ENCODE measurements at regions of chr1 and their contacts with region 1.

Region 1: DNA sequence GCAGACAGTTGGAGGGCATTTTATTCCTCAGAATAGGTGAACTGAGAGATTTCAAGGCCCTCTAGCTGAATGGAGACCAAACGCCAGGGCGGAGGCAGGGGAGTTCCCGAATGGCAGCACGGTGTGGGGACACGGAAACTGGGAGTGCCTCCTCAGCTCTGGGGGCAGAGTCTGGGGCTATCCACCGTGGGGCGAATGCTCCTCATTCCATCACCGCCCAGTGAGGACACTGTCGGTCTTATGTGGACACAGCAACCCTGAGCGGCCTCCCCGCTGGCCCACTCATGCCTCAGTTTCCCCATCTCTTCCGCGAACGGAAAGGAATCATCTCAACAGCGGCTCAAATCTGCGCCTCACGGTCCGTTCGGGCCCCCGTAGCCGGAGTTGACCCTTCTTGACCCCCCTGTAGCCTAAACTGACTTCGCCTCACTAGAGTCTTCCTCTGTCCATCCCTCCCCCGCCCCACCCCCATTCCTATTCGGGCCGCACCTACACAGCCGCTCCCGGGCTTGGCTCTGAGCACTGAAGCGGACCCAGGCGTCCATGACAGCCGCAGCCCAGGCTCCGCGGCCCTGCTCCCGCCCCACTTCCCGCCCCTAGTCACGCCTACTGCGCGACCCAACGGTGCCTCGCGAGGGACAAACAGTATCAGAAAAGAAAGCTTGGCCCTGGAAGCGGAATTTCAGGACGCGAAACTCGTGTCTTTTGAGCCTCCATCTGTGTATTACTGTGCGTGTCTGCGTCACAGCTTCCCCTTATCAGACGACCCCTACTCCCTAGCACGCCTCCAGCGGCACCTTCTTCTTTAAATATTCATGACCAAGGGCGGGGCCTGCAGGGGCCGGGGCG is at the start of gene PEX11B:
- DNase-seq: peak; percentile 94
- H3K4me3 Mint-ChIP-seq: peak within 1 kb of the TSS; percentile 90
- H3K27ac Mint-ChIP-seq: peak within 1 kb of the TSS; percentile 96
- H3K4me1 Mint-ChIP-seq: peaks cover 45% of the 10 kb centered on the region
- H3K27me3 Mint-ChIP-seq: no peaks in the 10 kb centered on the region
- total RNA-seq, gene PEX11B: 22.8 to 25.6 TPM

Region 2: DNA sequence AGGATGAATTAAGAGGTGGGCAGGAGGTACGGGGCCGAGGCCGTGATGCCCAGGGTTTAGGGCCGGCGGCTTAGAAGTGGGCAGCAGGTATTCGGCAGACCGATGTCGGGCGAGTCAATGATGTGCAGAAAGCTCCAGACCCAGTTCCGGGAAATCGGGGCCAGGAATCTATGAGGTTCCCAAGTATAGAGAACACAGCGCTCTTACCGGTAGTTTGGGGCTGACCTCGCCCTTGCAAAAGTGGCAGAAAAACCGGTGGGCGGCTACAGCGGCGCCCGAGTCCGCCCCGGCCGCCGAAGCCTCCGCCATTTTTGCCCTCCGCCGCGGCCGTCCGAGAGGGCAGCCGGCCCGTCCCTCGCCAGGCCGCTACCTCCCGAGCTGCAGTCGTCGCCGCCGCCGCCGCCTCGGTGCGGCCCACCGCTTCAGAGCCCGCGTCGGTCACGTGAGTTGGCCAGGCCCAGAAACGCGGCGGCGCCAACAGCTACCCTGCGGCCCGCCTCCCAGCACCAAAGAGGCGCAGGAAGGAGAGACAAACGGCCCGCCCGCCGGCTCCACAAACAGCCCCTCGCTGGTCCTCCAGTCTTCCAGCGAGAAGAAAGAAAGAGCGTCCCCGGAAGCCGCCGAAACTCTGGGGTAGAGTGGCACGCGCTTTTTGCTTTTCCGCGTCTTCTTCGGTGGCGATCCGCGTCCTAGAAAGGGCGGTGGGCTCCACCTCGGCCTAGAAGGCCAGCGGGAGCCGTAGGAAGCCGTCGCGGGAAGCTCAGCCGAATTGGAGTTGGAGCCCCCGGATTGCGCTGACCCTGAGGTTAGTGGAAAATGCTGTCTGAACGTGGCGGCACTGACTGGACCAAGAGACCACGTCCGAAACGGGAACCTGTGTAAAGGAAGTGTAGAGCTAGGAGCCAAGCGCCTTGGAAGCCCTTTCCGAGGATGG is 94.5 kb before region 1 on chr1 and contains the starts of genes POLR3C and RNF115:
- CTCF ChIA-PET with region 1: no interaction called
- POLR2A ChIA-PET with region 1: no interaction called
- intact Hi-C with region 1: loop called (anchors 5 kb)
- DNase-seq: peak; percentile 89
- H3K4me3 Mint-ChIP-seq: peak within 1 kb of the TSS; percentile 96
- H3K27ac Mint-ChIP-seq: peak within 1 kb of the TSS; percentile 95
- H3K4me1 Mint-ChIP-seq: peaks cover 47% of the 10 kb centered on the region
- H3K27me3 Mint-ChIP-seq: no peaks in the 10 kb centered on the region
- total RNA-seq, gene POLR3C: 27.3 to 28.9 TPM
- total RNA-seq, gene RNF115: 10.1 TPM

Region 3: GRCh38 chr1:145957443-145958319 is 39.3 kb after region 1 on chr1 and contains the start of gene LIX1L:
- CTCF ChIA-PET with region 1: interaction called, 7 read pairs
- POLR2A ChIA-PET with region 1: interaction called, 17 read pairs
- intact Hi-C with region 1: loop called (anchors 1 kb)
- DNase-seq: peak; percentile 97
- H3K4me3 Mint-ChIP-seq: peak within 1 kb of the TSS; percentile 87
- H3K27ac Mint-ChIP-seq: peak within 1 kb of the TSS; percentile 79
- H3K4me1 Mint-ChIP-seq: peaks cover 57% of the 10 kb centered on the region
- H3K27me3 Mint-ChIP-seq: no peaks in the 10 kb centered on the region
- total RNA-seq, gene LIX1L: 46.6 to 47.8 TPM

Region 4: GRCh38 chr1:145963995-145964901 is 45.9 kb after region 1 on chr1 and contains the starts of genes ANKRD34A and POLR3GL:
- CTCF ChIA-PET with region 1: interaction called, 5 read pairs
- POLR2A ChIA-PET with region 1: interaction called, 17 read pairs
- intact Hi-C with region 1: loop called (anchors 1 kb)
- DNase-seq: peak; percentile 96
- H3K4me3 Mint-ChIP-seq: peak within 1 kb of the TSS; percentile 98
- H3K27ac Mint-ChIP-seq: peak within 1 kb of the TSS; percentile 95
- H3K4me1 Mint-ChIP-seq: peaks cover 31% of the 10 kb centered on the region
- H3K27me3 Mint-ChIP-seq: no peaks in the 10 kb centered on the region
- total RNA-seq, gene ANKRD34A: 4.6 to 4.7 TPM
- total RNA-seq, gene POLR3GL: 27.3 to 30.9 TPM

Region 5: GRCh38 chr1:146019231-146020057 is 101.1 kb after region 1 on chr1:
- CTCF ChIA-PET with region 1: no interaction called
- POLR2A ChIA-PET with region 1: no interaction called
- intact Hi-C with region 1: no loop called
- DNase-seq: no peak
- H3K4me3 Mint-ChIP-seq: peak overlapping the region; percentile 6
- H3K27ac Mint-ChIP-seq: no peak overlapping the region
- H3K4me1 Mint-ChIP-seq: peaks cover 8% of the 10 kb centered on the region
- H3K27me3 Mint-ChIP-seq: peaks cover 29% of the 10 kb centered on the region

Measured in activated CD4-positive, alpha-beta memory T cell treated with anti-CD3 and anti-CD28 coated beads for 36 hours (primary cell).